Activated T-helper 1 cell treated with anti-CD3 and anti-CD28 coated beads, Interleukin-12 subunit alpha, Interleukin-12 subunit beta, Interleukin-2, Interleukin-4 antibody, amounts not matched to agents 30 ng/mL and 10 ng/mL and 1 ng/mL, durations not matched to agents 14 hours and 24 hours and 36 hours (primary cell): ENCODE measurements at regions of chr1 and their contacts with region 1.

Region 1: GRCh38 chr1:82110855-82111254 is 310.1 kb downstream of the ADGRL2 start:
- DNase-seq: no peak
- H3K4me3 Mint-ChIP-seq: no peak overlapping the region
- H3K27ac Mint-ChIP-seq: no peak overlapping the region
- H3K4me1 Mint-ChIP-seq: peaks cover 13% of the 10 kb centered on the region
- H3K27me3 Mint-ChIP-seq: no peaks in the 10 kb centered on the region

Region 2: DNA sequence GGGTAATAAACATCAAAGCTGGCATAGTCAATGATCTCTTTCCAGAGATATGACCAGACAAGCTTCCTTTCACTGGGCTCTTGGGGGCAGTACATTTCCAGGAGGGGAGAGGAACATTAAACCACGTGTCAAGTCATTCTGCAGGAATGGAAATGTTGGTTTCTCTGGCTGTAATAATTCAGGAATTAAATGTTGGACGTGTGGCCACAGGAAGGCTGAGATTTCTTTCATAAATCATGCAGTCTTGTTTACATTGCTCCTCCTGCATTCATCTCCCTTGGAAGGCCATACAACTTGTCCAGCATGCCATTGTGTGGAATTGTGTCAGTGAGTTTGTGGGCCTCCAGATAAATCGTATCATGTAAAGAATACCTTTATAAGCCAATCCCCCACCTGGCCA is 50.9 kb before region 1 on chr1:
- intact Hi-C with region 1: loop called (anchors 10 kb)
- DNase-seq: no peak
- H3K4me3 Mint-ChIP-seq: no peak overlapping the region
- H3K27ac Mint-ChIP-seq: no peak overlapping the region
- H3K4me1 Mint-ChIP-seq: no peaks in the 10 kb centered on the region
- H3K27me3 Mint-ChIP-seq: no peaks in the 10 kb centered on the region

Region 3: GRCh38 chr1:82090104-82090503 is 20.8 kb before region 1 on chr1:
- intact Hi-C with region 1: no loop called
- DNase-seq: no peak
- H3K4me3 Mint-ChIP-seq: no peak overlapping the region
- H3K27ac Mint-ChIP-seq: no peak overlapping the region
- H3K4me1 Mint-ChIP-seq: no peaks in the 10 kb centered on the region
- H3K27me3 Mint-ChIP-seq: no peaks in the 10 kb centered on the region